Naive thymus-derived CD8-positive, alpha-beta T cell (primary cell): ENCODE measurements at regions of chr19 and their contacts with region 1.

Region 1: GRCh38 chr19:40736661-40737060 is 13.6 kb downstream of the ACTMAP start:
- DNase-seq: no peak
- ATAC-seq: no peak
- H3K4me3 Mint-ChIP-seq: no peak overlapping the region
- H3K27ac Mint-ChIP-seq: no peak overlapping the region
- H3K4me1 Mint-ChIP-seq: peaks cover 0 to 3% (median 0%) of the 10 kb centered on the region in 4 donors
- H3K27me3 Mint-ChIP-seq: no peaks in the 10 kb centered on the region

Region 2: GRCh38 chr19:40717880-40718773 is 18.5 kb before region 1 on chr19:
- POLR2A ChIA-PET with region 1: no interaction called
- DNase-seq: no peak
- ATAC-seq: no peak
- H3K4me3 Mint-ChIP-seq: peak overlapping the region; percentile 80 to 98 (median 90)
- H3K27ac Mint-ChIP-seq: peak overlapping the region; percentile 79 to 99 (median 92)
- H3K4me1 Mint-ChIP-seq: peaks cover 38 to 78% (median 76%) of the 10 kb centered on the region in 4 donors
- H3K27me3 Mint-ChIP-seq: no peaks in the 10 kb centered on the region

Region 3: DNA sequence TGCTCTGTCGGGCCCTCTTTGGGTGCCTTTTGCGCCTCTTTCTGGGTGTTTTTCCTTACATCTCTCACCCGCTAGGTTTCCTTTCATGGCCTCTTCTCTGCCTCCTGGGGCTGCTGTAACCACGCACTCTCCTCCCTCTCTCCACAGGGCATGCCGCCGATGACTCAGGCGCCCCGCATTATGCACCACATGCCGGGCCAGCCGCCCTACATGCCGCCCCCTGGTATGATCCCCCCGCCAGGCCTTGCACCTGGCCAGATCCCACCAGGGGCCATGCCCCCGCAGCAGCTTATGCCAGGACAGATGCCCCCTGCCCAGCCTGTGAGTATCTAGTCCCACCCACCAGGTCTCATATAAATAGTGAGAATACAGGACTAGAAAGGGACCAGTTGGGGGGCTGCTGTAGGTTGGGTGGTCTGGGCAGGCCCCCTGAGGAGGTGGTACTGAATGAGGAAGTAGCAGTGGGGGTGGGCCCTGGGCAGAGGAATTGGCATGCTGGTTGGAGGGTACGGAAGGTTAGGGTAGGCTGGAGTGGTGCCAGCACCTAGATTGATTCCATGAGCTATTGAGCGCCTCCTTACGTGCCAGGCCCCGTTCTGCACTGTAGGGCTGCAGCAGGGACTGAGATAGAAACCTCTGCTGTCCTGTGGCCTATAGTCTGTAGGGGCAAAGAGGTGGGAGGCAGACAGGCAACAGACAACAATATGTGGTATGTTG is 26.3 kb after region 1 on chr19:
- POLR2A ChIA-PET with region 1: interaction called, 10 read pairs
- DNase-seq: peak in 1 of 10 donors; percentile 23
- ATAC-seq: peak; percentile 38 to 60
- H3K4me3 Mint-ChIP-seq: peak overlapping the region in 8 of 10 donors; percentile 27 to 58 (median 49)
- H3K27ac Mint-ChIP-seq: peak overlapping the region; percentile 75 to 93 (median 88)
- H3K4me1 Mint-ChIP-seq: peaks cover 34 to 69% (median 55%) of the 10 kb centered on the region in 4 donors
- H3K27me3 Mint-ChIP-seq: no peaks in the 10 kb centered on the region